ENCODE measurements at regions of chr17 and their contacts with region 1.

Region 1: GRCh38 chr17:51166197-51166986 is at the start of gene NME2:
- DNase-seq: peak; percentile 51 to 69 (median 59)
- H3K4me3 ChIP-seq: peak within 1 kb of the TSS; percentile 29 to 79
- H3K4me3 Mint-ChIP-seq: peak within 1 kb of the TSS; percentile 89 to 99 (median 97)
- H3K27ac ChIP-seq: peak within 1 kb of the TSS; percentile 61
- H3K27ac Mint-ChIP-seq: peak within 1 kb of the TSS; percentile 94 to 99 (median 98)
- H3K4me1 ChIP-seq: peaks cover 14% of the 10 kb centered on the region
- H3K4me1 Mint-ChIP-seq: peaks cover 15 to 34% (median 23%) of the 10 kb centered on the region in 4 donors
- H3K27me3 ChIP-seq: no peaks in the 10 kb centered on the region
- H3K27me3 Mint-ChIP-seq: no peaks in the 10 kb centered on the region
- total RNA-seq, gene NME2: 134 to 142 TPM

Region 2: GRCh38 chr17:51153210-51154072 is 13.0 kb before region 1 on chr17 and contains the start of gene NME1:
- CTCF ChIA-PET with region 1: interaction called, 11 read pairs
- POLR2A ChIA-PET with region 1: interaction called, 56 read pairs
- intact Hi-C with region 1: loop called (anchors 1 kb)
- DNase-seq: peak; percentile 98 to 99 (median 98)
- H3K4me3 ChIP-seq: peak within 1 kb of the TSS; percentile 77 to 85
- H3K4me3 Mint-ChIP-seq: no peak within 1 kb of the TSS
- H3K27ac ChIP-seq: peak within 1 kb of the TSS; percentile 61
- H3K27ac Mint-ChIP-seq: no peak within 1 kb of the TSS
- H3K4me1 ChIP-seq: peaks cover 21% of the 10 kb centered on the region
- H3K4me1 Mint-ChIP-seq: peaks cover 0 to 7% (median 2%) of the 10 kb centered on the region in 4 donors
- H3K27me3 ChIP-seq: no peaks in the 10 kb centered on the region
- H3K27me3 Mint-ChIP-seq: peaks cover 0 to 1% of the 10 kb centered on the region in 2 donors
- total RNA-seq, gene NME1: 10.0 to 12.2 TPM

Region 3: GRCh38 chr17:51260125-51260880 is 93.9 kb after region 1 on chr17 and contains the start of gene UTP18:
- CTCF ChIA-PET with region 1: interaction called, 3 read pairs
- POLR2A ChIA-PET with region 1: interaction called, 6 read pairs
- intact Hi-C with region 1: loop called (anchors 2 kb)
- DNase-seq: peak; percentile 96 to 98 (median 97)
- H3K4me3 ChIP-seq: peak within 1 kb of the TSS; percentile 74 to 85
- H3K4me3 Mint-ChIP-seq: peak within 1 kb of the TSS; percentile 91 to 98 (median 96)
- H3K27ac ChIP-seq: peak within 1 kb of the TSS; percentile 97
- H3K27ac Mint-ChIP-seq: peak within 1 kb of the TSS; percentile 96 to 99 (median 99)
- H3K4me1 ChIP-seq: peaks cover 72% of the 10 kb centered on the region
- H3K4me1 Mint-ChIP-seq: peaks cover 42 to 84% (median 58%) of the 10 kb centered on the region in 4 donors
- H3K27me3 ChIP-seq: no peaks in the 10 kb centered on the region
- H3K27me3 Mint-ChIP-seq: no peaks in the 10 kb centered on the region
- total RNA-seq, gene UTP18: 44.0 to 44.1 TPM

Region 4: GRCh38 chr17:51419476-51419875 is 253.1 kb after region 1 on chr17:
- CTCF ChIA-PET with region 1: no interaction called
- POLR2A ChIA-PET with region 1: no interaction called
- intact Hi-C with region 1: no loop called
- DNase-seq: no peak
- H3K4me3 ChIP-seq: no peak overlapping the region
- H3K4me3 Mint-ChIP-seq: no peak overlapping the region
- H3K27ac ChIP-seq: no peak overlapping the region
- H3K27ac Mint-ChIP-seq: peak overlapping the region in 1 of 7 donors; percentile 49
- H3K4me1 ChIP-seq: peaks cover 4% of the 10 kb centered on the region
- H3K4me1 Mint-ChIP-seq: peaks cover 5 to 15% (median 12%) of the 10 kb centered on the region in 4 donors
- H3K27me3 ChIP-seq: no peaks in the 10 kb centered on the region
- H3K27me3 Mint-ChIP-seq: no peaks in the 10 kb centered on the region

Measured in CD4-positive, alpha-beta memory T cell (primary cell).